CD4-positive, alpha-beta T cell (primary cell): ENCODE measurements at regions of chr7 and their contacts with region 1.

Region 1: GRCh38 chr7:26365077-26365900 is 73.6 kb downstream of the SNX10 start:
- DNase-seq: peak; percentile 16 to 84 (median 34)
- ATAC-seq: peak; percentile 86
- H3K4me3 ChIP-seq: no peak overlapping the region
- H3K4me3 Mint-ChIP-seq: no peak overlapping the region
- H3K27ac ChIP-seq: no peak overlapping the region
- H3K27ac Mint-ChIP-seq: no peak overlapping the region
- H3K4me1 ChIP-seq: peaks cover 2% of the 10 kb centered on the region
- H3K4me1 Mint-ChIP-seq: peaks cover 13% of the 10 kb centered on the region
- H3K27me3 ChIP-seq: no peaks in the 10 kb centered on the region
- H3K27me3 Mint-ChIP-seq: no peaks in the 10 kb centered on the region
- CTCF ChIP-seq: peak; percentile 83

Region 2: DNA sequence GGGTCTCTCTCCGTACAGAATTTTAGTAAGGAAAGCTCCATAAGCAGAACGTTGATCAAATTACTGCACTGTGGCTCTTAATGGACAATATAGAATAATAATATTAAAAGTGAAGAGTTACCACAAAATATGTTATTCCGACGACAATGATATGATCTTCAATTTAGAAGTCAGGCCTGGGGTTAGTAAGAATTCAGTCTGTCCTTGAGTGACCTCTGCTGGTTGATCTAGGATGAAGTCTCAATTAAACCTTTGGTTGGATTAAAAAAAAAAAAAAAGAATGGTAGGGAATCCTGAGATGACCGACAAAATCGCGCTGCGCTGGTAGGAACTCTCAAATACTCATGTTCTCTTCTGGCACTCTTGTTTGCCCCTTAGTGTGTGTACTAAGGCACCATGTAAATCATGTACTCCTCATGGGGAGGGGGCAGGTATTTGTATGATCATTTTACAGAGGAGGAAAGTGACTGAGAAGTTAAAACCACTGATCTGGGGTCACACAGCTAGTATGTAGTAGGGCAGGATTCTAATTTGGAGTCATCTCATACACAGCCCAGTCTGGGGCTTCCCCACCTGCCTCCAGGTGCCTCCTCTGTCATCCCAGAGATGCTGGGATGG is 975.7 kb before region 1 on chr7:
- CTCF ChIA-PET with region 1: no interaction called
- POLR2A ChIA-PET with region 1: no interaction called
- intact Hi-C with region 1: loop called in 1 of 2 experiments (anchors 5 kb)
- DNase-seq: peak in 4 of 14 experiments; percentile 13 to 70 (median 44)
- ATAC-seq: peak; percentile 29
- H3K4me3 ChIP-seq: no peak overlapping the region
- H3K4me3 Mint-ChIP-seq: no peak overlapping the region
- H3K27ac ChIP-seq: no peak overlapping the region
- H3K27ac Mint-ChIP-seq: no peak overlapping the region
- H3K4me1 ChIP-seq: no peaks in the 10 kb centered on the region
- H3K4me1 Mint-ChIP-seq: no peaks in the 10 kb centered on the region
- H3K27me3 ChIP-seq: no peaks in the 10 kb centered on the region
- H3K27me3 Mint-ChIP-seq: peaks cover 4% of the 10 kb centered on the region
- CTCF ChIP-seq: peak; percentile 44

Region 3: GRCh38 chr7:25951031-25951948 is 414.0 kb before region 1 on chr7:
- CTCF ChIA-PET with region 1: no interaction called
- POLR2A ChIA-PET with region 1: no interaction called
- intact Hi-C with region 1: loop called in 1 of 2 experiments (anchors 5 kb)
- DNase-seq: peak; percentile 77 to 96 (median 88)
- ATAC-seq: peak; percentile 98
- H3K4me3 ChIP-seq: peak overlapping the region; percentile 64
- H3K4me3 Mint-ChIP-seq: peak overlapping the region; percentile 96
- H3K27ac ChIP-seq: no peak overlapping the region
- H3K27ac Mint-ChIP-seq: peak overlapping the region; percentile 69
- H3K4me1 ChIP-seq: peaks cover 19% of the 10 kb centered on the region
- H3K4me1 Mint-ChIP-seq: peaks cover 30% of the 10 kb centered on the region
- H3K27me3 ChIP-seq: no peaks in the 10 kb centered on the region
- H3K27me3 Mint-ChIP-seq: no peaks in the 10 kb centered on the region
- CTCF ChIP-seq: no peak

Region 4: DNA sequence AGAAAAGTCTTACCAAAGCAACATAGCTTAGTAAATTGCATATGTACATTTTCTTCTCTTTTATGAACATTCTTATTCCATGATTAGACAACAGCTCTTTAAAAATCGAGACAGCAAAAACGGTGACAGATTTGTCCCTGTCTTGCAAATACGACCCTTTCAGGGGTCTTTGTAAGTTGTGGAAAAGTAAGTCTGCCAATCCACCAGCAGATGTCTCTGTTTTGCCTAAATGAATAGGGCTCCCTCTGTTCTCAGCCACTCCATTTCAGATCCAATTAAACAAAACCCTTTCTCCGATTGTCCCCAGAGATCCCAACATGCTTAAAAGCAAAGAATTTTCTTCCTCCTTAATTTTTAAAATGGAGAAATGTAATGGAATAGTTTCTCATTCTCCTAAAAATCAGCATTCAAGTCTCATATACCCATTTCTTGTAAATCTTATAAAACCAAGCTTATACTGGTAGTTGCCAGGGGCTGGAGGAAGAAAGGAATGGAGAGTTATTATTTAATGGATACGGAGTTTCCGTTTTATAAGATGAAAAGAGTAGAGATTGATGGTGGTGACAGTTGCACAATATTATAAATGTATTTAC is 274.3 kb before region 1 on chr7:
- CTCF ChIA-PET with region 1: interaction called, 14 read pairs
- POLR2A ChIA-PET with region 1: interaction called, 6 read pairs
- intact Hi-C with region 1: loop called (anchors 1 kb)
- DNase-seq: peak in 4 of 14 experiments; percentile 31 to 73 (median 64)
- ATAC-seq: peak; percentile 71
- H3K4me3 ChIP-seq: no peak overlapping the region
- H3K4me3 Mint-ChIP-seq: no peak overlapping the region
- H3K27ac ChIP-seq: no peak overlapping the region
- H3K27ac Mint-ChIP-seq: no peak overlapping the region
- H3K4me1 ChIP-seq: peaks cover 7% of the 10 kb centered on the region
- H3K4me1 Mint-ChIP-seq: peaks cover 40% of the 10 kb centered on the region
- H3K27me3 ChIP-seq: no peaks in the 10 kb centered on the region
- H3K27me3 Mint-ChIP-seq: no peaks in the 10 kb centered on the region
- CTCF ChIP-seq: peak; percentile 92

Region 5: GRCh38 chr7:26291699-26292538 is 73.4 kb before region 1 on chr7 and contains the start of gene SNX10:
- CTCF ChIA-PET with region 1: interaction called, 8 read pairs
- POLR2A ChIA-PET with region 1: interaction called, 8 read pairs
- intact Hi-C with region 1: loop called (anchors 5 kb)
- DNase-seq: peak; percentile 40 to 91 (median 64)
- ATAC-seq: peak; percentile 82
- H3K4me3 ChIP-seq: peak within 1 kb of the TSS; percentile 89
- H3K4me3 Mint-ChIP-seq: peak within 1 kb of the TSS; percentile 95
- H3K27ac ChIP-seq: peak within 1 kb of the TSS; percentile 46 to 53
- H3K27ac Mint-ChIP-seq: peak within 1 kb of the TSS; percentile 72
- H3K4me1 ChIP-seq: peaks cover 38% of the 10 kb centered on the region
- H3K4me1 Mint-ChIP-seq: peaks cover 37% of the 10 kb centered on the region
- H3K27me3 ChIP-seq: no peaks in the 10 kb centered on the region
- H3K27me3 Mint-ChIP-seq: no peaks in the 10 kb centered on the region
- CTCF ChIP-seq: no peak
- total RNA-seq, gene SNX10: 4.6 to 5.8 TPM

Region 6: DNA sequence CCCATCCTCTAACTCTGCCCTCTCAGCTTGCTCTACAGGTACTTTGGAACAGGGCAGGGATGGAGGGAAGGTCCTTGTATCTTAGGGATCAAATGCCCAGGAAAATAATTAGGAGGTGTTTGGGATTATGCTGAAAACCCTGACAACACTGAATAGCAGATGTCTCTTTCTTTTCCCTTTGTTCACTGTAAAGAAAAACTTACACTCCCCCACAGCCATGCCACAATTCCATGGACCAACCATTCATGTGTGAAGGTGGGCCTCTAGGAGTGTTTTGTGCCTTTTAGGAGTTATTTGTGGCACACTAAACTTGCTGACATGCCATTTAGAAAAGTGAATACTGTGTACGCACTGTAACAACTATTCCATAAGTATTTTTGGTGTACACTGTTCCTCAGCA is 34.4 kb after region 1 on chr7:
- CTCF ChIA-PET with region 1: no interaction called
- POLR2A ChIA-PET with region 1: no interaction called
- intact Hi-C with region 1: no loop called
- DNase-seq: no peak
- ATAC-seq: no peak
- H3K4me3 ChIP-seq: no peak overlapping the region
- H3K4me3 Mint-ChIP-seq: peak overlapping the region; percentile 68
- H3K27ac ChIP-seq: no peak overlapping the region
- H3K27ac Mint-ChIP-seq: no peak overlapping the region
- H3K4me1 ChIP-seq: peaks cover 14% of the 10 kb centered on the region
- H3K4me1 Mint-ChIP-seq: peaks cover 11% of the 10 kb centered on the region
- H3K27me3 ChIP-seq: peaks cover 26 to 29% of the 10 kb centered on the region in 2 experiments
- H3K27me3 Mint-ChIP-seq: peaks cover 67% of the 10 kb centered on the region
- CTCF ChIP-seq: no peak

Region 7: GRCh38 chr7:26667500-26668133 is 302.3 kb after region 1 on chr7:
- CTCF ChIA-PET with region 1: interaction called, 17 read pairs
- POLR2A ChIA-PET with region 1: interaction called, 9 read pairs
- intact Hi-C with region 1: loop called (anchors 1 kb)
- DNase-seq: peak in 12 of 14 experiments; percentile 15 to 82 (median 30)
- ATAC-seq: peak; percentile 61
- H3K4me3 ChIP-seq: no peak overlapping the region
- H3K4me3 Mint-ChIP-seq: no peak overlapping the region
- H3K27ac ChIP-seq: no peak overlapping the region
- H3K27ac Mint-ChIP-seq: no peak overlapping the region
- H3K4me1 ChIP-seq: no peaks in the 10 kb centered on the region
- H3K4me1 Mint-ChIP-seq: peaks cover 19% of the 10 kb centered on the region
- H3K27me3 ChIP-seq: no peaks in the 10 kb centered on the region
- H3K27me3 Mint-ChIP-seq: peaks cover 15% of the 10 kb centered on the region
- CTCF ChIP-seq: peak; percentile 75

Region 8: GRCh38 chr7:27501001-27501400 is 1135.7 kb after region 1 on chr7:
- CTCF ChIA-PET with region 1: no interaction called
- POLR2A ChIA-PET with region 1: no interaction called
- intact Hi-C with region 1: no loop called
- DNase-seq: no peak
- ATAC-seq: no peak
- H3K4me3 ChIP-seq: no peak overlapping the region
- H3K4me3 Mint-ChIP-seq: no peak overlapping the region
- H3K27ac ChIP-seq: no peak overlapping the region
- H3K27ac Mint-ChIP-seq: no peak overlapping the region
- H3K4me1 ChIP-seq: no peaks in the 10 kb centered on the region
- H3K4me1 Mint-ChIP-seq: no peaks in the 10 kb centered on the region
- H3K27me3 ChIP-seq: no peaks in the 10 kb centered on the region
- H3K27me3 Mint-ChIP-seq: no peaks in the 10 kb centered on the region
- CTCF ChIP-seq: no peak